ENCODE measurements at regions of chr3 and their contacts with region 1.

Region 1: GRCh38 chr3:168165390-168166269 is 69.9 kb upstream of the GOLIM4 start:
- DNase-seq: peak; percentile 69
- H3K4me3 ChIP-seq: no peak overlapping the region
- H3K27ac ChIP-seq: no peak overlapping the region
- H3K4me1 ChIP-seq: peaks cover 0 to 29% (median 20%) of the 10 kb centered on the region in 4 donors
- H3K27me3 ChIP-seq: no peaks in the 10 kb centered on the region
- CTCF ChIP-seq: peak; percentile 56 to 88 (median 72)
- EP300 ChIP-seq: no peak
- POLR2A ChIP-seq: no peak

Region 2: GRCh38 chr3:167734498-167735232 is 431.0 kb before region 1 on chr3 and contains the start of gene PDCD10:
- intact Hi-C with region 1: loop called (anchors 10 kb)
- DNase-seq: peak; percentile 99
- H3K4me3 ChIP-seq: peak within 1 kb of the TSS; percentile 65 to 87 (median 84)
- H3K27ac ChIP-seq: peak within 1 kb of the TSS; percentile 89 to 94 (median 90)
- H3K4me1 ChIP-seq: peaks cover 2 to 30% (median 17%) of the 10 kb centered on the region in 4 donors
- H3K27me3 ChIP-seq: no peaks in the 10 kb centered on the region
- CTCF ChIP-seq: peak in 1 of 4 experiments; percentile 9
- EP300 ChIP-seq: no peak
- POLR2A ChIP-seq: peak; percentile 31 to 44
- total RNA-seq, gene PDCD10: 49.3 to 67.0 (median 60.7) TPM

Region 3: GRCh38 chr3:168047190-168047795 is 118.3 kb before region 1 on chr3:
- intact Hi-C with region 1: loop called (anchors 1 kb)
- DNase-seq: no peak
- H3K4me3 ChIP-seq: no peak overlapping the region
- H3K27ac ChIP-seq: no peak overlapping the region
- H3K4me1 ChIP-seq: peaks cover 0 to 32% (median 27%) of the 10 kb centered on the region in 4 donors
- H3K27me3 ChIP-seq: no peaks in the 10 kb centered on the region
- CTCF ChIP-seq: peak; percentile 72 to 89 (median 75)
- EP300 ChIP-seq: no peak
- POLR2A ChIP-seq: no peak

Region 4: DNA sequence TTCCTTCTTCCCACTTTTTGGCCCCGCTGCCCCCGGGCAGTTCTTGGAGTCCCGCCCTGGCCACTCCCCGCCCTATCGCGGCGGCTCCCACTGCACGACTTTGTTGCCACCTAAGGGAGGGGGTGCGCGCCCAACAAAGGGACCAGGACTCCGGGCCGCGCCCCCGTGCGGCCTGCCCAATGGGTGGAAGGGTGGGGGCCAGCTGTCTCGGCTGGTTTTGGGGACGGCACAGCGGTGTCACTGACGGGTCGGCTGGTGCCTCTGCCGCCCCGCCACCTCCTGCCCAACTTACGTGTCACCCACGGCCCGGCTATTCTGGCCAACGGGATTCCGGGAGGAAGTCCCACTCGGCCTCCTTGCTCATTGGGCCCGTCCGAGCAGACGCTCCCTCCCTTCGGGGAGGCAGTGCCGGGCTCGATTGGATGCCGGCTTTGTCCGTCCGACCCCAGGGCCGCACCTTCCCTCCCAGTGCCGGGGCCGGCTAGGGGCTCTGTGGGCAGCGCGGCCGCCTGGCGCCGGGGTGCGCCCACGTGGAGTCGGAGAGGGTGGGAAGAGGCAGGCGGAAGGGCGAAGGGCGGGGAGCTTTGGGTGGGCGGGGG is 69.9 kb before region 1 on chr3 and contains the start of gene GOLIM4:
- intact Hi-C with region 1: loop called (anchors 2 kb)
- DNase-seq: peak; percentile 97
- H3K4me3 ChIP-seq: peak within 1 kb of the TSS; percentile 73 to 96 (median 80)
- H3K27ac ChIP-seq: peak within 1 kb of the TSS; percentile 88 to 98 (median 96)
- H3K4me1 ChIP-seq: peaks cover 0 to 43% (median 36%) of the 10 kb centered on the region in 4 donors
- H3K27me3 ChIP-seq: no peaks in the 10 kb centered on the region
- CTCF ChIP-seq: no peak
- EP300 ChIP-seq: no peak
- POLR2A ChIP-seq: peak; percentile 55 to 81
- total RNA-seq, gene GOLIM4: 27.1 to 33.2 (median 27.3) TPM

Measured in sigmoid colon (tissue), 7 donors.